CD4-positive, alpha-beta T cell (primary cell): ENCODE measurements at regions of chr5 and their contacts with region 1.

Region 1: GRCh38 chr5:35777358-35778087 is 79.2 kb upstream of the IL7R start:
- DNase-seq: peak; percentile 50 to 90 (median 68)
- ATAC-seq: peak; percentile 63
- H3K4me3 ChIP-seq: peak overlapping the region; percentile 7
- H3K4me3 Mint-ChIP-seq: peak overlapping the region; percentile 77
- H3K27ac ChIP-seq: peak overlapping the region in 1 of 2 donors; percentile 19
- H3K27ac Mint-ChIP-seq: peak overlapping the region; percentile 84
- H3K4me1 ChIP-seq: peaks cover 32% of the 10 kb centered on the region
- H3K4me1 Mint-ChIP-seq: peaks cover 74% of the 10 kb centered on the region
- H3K27me3 ChIP-seq: no peaks in the 10 kb centered on the region
- H3K27me3 Mint-ChIP-seq: no peaks in the 10 kb centered on the region
- CTCF ChIP-seq: peak; percentile 87

Region 2: DNA sequence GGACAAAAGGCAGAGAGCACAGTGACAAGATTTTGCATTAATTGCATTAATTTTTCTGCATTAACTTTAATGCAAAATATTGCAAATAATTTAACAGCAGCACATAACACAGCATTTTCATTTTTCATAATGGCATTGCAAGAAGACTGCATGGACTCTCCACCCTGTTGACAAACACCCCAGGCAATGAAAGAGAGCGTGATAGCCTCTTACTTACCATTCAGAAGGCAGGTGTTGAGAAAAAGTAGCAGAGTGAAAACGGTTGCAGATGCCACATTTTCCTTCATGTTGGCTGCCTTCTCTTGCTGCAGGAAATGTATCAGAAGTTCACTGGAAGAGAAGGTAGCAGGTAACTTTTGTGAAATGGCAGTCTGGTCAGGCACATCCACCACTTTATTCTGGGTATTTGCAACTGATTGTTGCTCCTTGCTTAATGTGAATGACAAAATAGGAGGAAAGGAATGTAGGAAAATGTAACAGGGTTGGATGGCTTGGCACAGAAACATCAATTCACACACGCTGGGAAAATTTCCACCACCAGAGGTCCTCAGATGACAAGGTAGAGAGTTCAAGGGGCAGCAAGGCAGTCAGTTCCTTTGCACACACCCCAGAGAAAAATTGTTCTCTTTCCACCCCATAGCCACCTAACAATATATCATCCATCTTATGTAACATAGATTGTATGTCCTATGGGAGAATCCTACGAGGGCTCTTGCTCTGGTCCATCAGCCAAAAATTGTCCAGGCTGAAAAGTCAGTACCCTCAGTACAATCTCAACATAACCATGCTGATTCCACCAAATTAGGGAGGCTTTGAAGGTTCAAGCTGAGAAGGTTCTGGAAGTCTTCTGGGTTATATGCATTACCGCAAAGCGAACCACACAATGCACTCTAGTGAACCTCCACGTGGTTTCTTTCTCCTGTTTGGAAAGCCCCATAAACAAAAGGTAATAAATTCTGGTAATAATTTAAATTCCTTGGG is 687.9 kb before region 1 on chr5:
- CTCF ChIA-PET with region 1: no interaction called
- POLR2A ChIA-PET with region 1: no interaction called
- intact Hi-C with region 1: loop called (anchors 5 to 10 kb)
- DNase-seq: peak; percentile 25 to 69 (median 40)
- ATAC-seq: peak; percentile 52
- H3K4me3 ChIP-seq: no peak overlapping the region
- H3K4me3 Mint-ChIP-seq: no peak overlapping the region
- H3K27ac ChIP-seq: no peak overlapping the region
- H3K27ac Mint-ChIP-seq: no peak overlapping the region
- H3K4me1 ChIP-seq: no peaks in the 10 kb centered on the region
- H3K4me1 Mint-ChIP-seq: no peaks in the 10 kb centered on the region
- H3K27me3 ChIP-seq: peaks cover 0 to 7% of the 10 kb centered on the region in 2 experiments
- H3K27me3 Mint-ChIP-seq: peaks cover 5% of the 10 kb centered on the region
- CTCF ChIP-seq: peak; percentile 66

Region 3: GRCh38 chr5:35794684-35795375 is 17.3 kb after region 1 on chr5:
- CTCF ChIA-PET with region 1: interaction called, 8 read pairs
- POLR2A ChIA-PET with region 1: interaction called, 23 read pairs
- intact Hi-C with region 1: loop called in 1 of 2 experiments (anchors 2 kb)
- DNase-seq: no peak
- ATAC-seq: no peak
- H3K4me3 ChIP-seq: no peak overlapping the region
- H3K4me3 Mint-ChIP-seq: peak overlapping the region; percentile 52
- H3K27ac ChIP-seq: peak overlapping the region in 1 of 2 donors; percentile 18
- H3K27ac Mint-ChIP-seq: peak overlapping the region; percentile 92
- H3K4me1 ChIP-seq: peaks cover 54% of the 10 kb centered on the region
- H3K4me1 Mint-ChIP-seq: peaks cover 91% of the 10 kb centered on the region
- H3K27me3 ChIP-seq: no peaks in the 10 kb centered on the region
- H3K27me3 Mint-ChIP-seq: no peaks in the 10 kb centered on the region
- CTCF ChIP-seq: no peak

Region 4: GRCh38 chr5:35822511-35822910 is 45.0 kb after region 1 on chr5:
- CTCF ChIA-PET with region 1: interaction called, 20 read pairs
- POLR2A ChIA-PET with region 1: interaction called, 71 read pairs
- intact Hi-C with region 1: no loop called
- DNase-seq: peak; percentile 38 to 79 (median 58)
- ATAC-seq: peak; percentile 72
- H3K4me3 ChIP-seq: peak overlapping the region; percentile 5
- H3K4me3 Mint-ChIP-seq: peak overlapping the region; percentile 70
- H3K27ac ChIP-seq: peak overlapping the region; percentile 50 to 54
- H3K27ac Mint-ChIP-seq: peak overlapping the region; percentile 87
- H3K4me1 ChIP-seq: peaks cover 85% of the 10 kb centered on the region
- H3K4me1 Mint-ChIP-seq: peaks cover 90% of the 10 kb centered on the region
- H3K27me3 ChIP-seq: no peaks in the 10 kb centered on the region
- H3K27me3 Mint-ChIP-seq: no peaks in the 10 kb centered on the region
- CTCF ChIP-seq: no peak

Region 5: DNA sequence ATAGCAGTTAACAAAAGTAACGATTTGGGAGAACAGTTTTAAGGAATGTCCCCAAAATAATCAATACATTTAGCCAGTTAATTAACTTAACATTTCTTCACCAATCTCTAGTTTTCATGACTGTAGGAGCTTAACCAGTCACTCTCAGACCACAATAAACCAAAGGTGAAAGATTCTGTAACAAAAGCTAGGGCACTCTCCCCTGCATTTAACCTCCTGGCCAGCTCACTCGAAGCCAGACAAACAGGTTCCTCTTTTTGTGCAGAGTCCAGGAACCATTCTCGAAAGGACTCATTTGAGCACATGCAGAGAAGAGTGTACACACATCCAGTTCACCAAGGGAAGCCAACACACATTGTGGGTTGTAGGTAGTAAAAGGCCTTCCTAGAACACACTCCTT is 85.6 kb after region 1 on chr5:
- CTCF ChIA-PET with region 1: interaction called, 19 read pairs
- POLR2A ChIA-PET with region 1: interaction called, 384 read pairs
- intact Hi-C with region 1: loop called (anchors 1 to 2 kb)
- DNase-seq: no peak
- ATAC-seq: no peak
- H3K4me3 ChIP-seq: peak overlapping the region; percentile 88
- H3K4me3 Mint-ChIP-seq: peak overlapping the region; percentile 93
- H3K27ac ChIP-seq: peak overlapping the region; percentile 43 to 63
- H3K27ac Mint-ChIP-seq: peak overlapping the region; percentile 99
- H3K4me1 ChIP-seq: peaks cover 18% of the 10 kb centered on the region
- H3K4me1 Mint-ChIP-seq: peaks cover 83% of the 10 kb centered on the region
- H3K27me3 ChIP-seq: no peaks in the 10 kb centered on the region
- H3K27me3 Mint-ChIP-seq: no peaks in the 10 kb centered on the region
- CTCF ChIP-seq: no peak

Region 6: GRCh38 chr5:35926389-35927051 is 149.0 kb after region 1 on chr5:
- CTCF ChIA-PET with region 1: interaction called, 79 read pairs
- POLR2A ChIA-PET with region 1: interaction called, 6 read pairs
- intact Hi-C with region 1: loop called (anchors 1 kb)
- DNase-seq: peak in 13 of 14 experiments; percentile 30 to 85 (median 51)
- ATAC-seq: peak; percentile 44
- H3K4me3 ChIP-seq: no peak overlapping the region
- H3K4me3 Mint-ChIP-seq: peak overlapping the region; percentile 80
- H3K27ac ChIP-seq: no peak overlapping the region
- H3K27ac Mint-ChIP-seq: no peak overlapping the region
- H3K4me1 ChIP-seq: peaks cover 22% of the 10 kb centered on the region
- H3K4me1 Mint-ChIP-seq: peaks cover 43% of the 10 kb centered on the region
- H3K27me3 ChIP-seq: no peaks in the 10 kb centered on the region
- H3K27me3 Mint-ChIP-seq: no peaks in the 10 kb centered on the region
- CTCF ChIP-seq: peak; percentile 96